ENCODE measurements at regions of chr2 and their contacts with region 1.

Region 1: GRCh38 chr2:55050133-55050994 is at the start of gene RTN4:
- DNase-seq: peak; percentile 99
- ATAC-seq: peak; percentile 92
- H3K4me3 Mint-ChIP-seq: peak within 1 kb of the TSS; percentile 99
- H3K27ac Mint-ChIP-seq: peak within 1 kb of the TSS; percentile 100
- H3K4me1 Mint-ChIP-seq: peaks cover 60% of the 10 kb centered on the region
- H3K27me3 Mint-ChIP-seq: no peaks in the 10 kb centered on the region
- total RNA-seq, gene RTN4: 70.3 to 84.8 TPM

Region 2: DNA sequence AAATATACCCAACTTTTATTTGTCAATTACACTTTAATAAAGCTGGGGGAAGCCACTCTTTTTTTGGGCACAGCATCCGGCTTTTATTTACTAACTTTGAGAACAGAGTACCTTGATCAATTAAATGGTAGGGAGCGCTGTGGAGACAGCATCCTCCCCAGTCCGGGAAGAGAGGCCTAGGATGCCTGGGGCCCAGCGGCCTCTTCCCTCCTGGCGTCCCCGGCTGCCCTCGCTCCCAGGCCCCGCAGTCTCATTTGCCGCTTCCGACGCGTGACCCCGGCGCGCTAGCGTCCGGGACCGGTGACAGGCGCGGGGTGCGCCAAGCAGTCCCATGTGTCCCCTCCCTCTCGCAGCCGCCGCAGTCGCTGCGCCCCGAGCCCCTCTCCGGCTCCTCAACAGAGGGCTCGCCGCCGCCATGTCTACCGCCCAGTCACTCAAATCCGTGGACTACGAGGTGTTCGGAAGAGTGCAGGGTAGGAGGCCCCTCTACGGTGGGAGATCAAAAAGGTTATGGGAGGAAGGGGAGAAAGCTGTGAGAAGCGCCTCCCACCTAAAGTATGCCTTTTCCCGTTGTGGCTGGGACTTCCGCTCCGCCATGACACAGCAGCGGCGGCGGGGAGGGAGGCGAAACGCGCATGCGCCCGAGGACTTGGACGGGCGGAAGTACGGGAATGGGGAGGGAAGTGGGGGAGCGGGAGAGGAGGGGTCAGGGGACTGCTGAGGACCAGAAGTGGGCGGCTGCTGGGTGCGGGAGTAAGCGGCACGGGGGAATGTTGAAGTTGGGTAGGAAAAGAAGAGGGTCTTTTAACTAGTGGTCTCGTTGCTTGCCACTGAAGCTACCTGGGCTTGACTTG is 934.9 kb before region 1 on chr2 and contains the start of gene ACYP2:
- CTCF ChIA-PET with region 1: no interaction called
- POLR2A ChIA-PET with region 1: no interaction called
- intact Hi-C with region 1: loop called in 1 of 2 experiments (anchors 1 kb)
- DNase-seq: peak; percentile 95
- ATAC-seq: peak; percentile 90
- H3K4me3 Mint-ChIP-seq: peak within 1 kb of the TSS; percentile 85
- H3K27ac Mint-ChIP-seq: peak within 1 kb of the TSS; percentile 96
- H3K4me1 Mint-ChIP-seq: peaks cover 12% of the 10 kb centered on the region
- H3K27me3 Mint-ChIP-seq: peaks cover 2% of the 10 kb centered on the region
- total RNA-seq, gene ACYP2: 6.0 to 6.9 TPM

Region 3: GRCh38 chr2:54899576-54900200 is 150.7 kb before region 1 on chr2:
- CTCF ChIA-PET with region 1: no interaction called
- POLR2A ChIA-PET with region 1: no interaction called
- intact Hi-C with region 1: loop called in 1 of 2 experiments (anchors 1 kb)
- DNase-seq: no peak
- ATAC-seq: no peak
- H3K4me3 Mint-ChIP-seq: no peak overlapping the region
- H3K27ac Mint-ChIP-seq: no peak overlapping the region
- H3K4me1 Mint-ChIP-seq: peaks cover 28% of the 10 kb centered on the region
- H3K27me3 Mint-ChIP-seq: no peaks in the 10 kb centered on the region

Region 4: DNA sequence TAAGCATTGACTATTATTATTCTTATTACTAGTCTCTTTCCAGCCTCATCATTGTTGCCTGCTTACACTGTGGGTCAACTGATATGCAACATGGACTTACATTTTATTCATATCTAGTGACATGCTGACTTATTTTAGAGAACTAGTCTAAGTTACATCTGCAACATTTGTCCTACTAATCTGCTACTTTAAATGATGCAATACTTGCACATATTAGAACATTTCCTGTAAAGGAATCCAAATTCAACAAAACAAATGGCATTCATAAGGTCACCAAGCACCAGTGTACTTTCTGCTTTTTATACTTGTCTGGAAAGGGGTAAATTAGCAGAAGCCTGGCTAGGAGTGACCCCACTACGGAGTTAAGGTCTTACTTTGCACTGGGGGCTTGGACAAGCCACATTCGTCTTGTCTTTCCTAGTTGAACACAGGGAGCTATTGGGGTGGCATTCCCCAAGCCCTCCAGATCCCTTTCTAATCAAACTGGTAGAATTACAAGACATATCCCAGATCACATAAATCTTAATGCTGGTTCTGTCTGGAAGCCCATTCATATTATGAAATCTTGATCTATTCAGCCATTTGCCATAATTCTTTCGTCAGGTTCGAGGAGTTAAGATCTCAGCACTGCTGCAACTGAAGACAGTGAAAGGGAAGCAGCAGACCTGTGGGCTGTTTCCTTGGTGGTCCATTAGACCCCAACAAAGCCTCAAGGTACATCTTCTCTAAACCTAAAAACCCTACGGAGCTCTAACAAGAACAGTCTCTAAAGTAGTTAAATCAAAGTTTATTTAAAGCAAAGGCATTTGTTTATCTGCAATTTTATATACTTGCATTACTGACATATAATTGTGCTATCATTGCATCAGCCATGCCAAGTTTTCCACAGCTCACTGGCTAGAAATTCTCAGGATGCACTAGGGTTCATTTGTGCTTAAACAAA is 49.8 kb after region 1 on chr2:
- CTCF ChIA-PET with region 1: no interaction called
- POLR2A ChIA-PET with region 1: no interaction called
- intact Hi-C with region 1: loop called in 1 of 2 experiments (anchors 5 kb)
- DNase-seq: no peak
- ATAC-seq: peak; percentile 60
- H3K4me3 Mint-ChIP-seq: no peak overlapping the region
- H3K27ac Mint-ChIP-seq: peak overlapping the region; percentile 81
- H3K4me1 Mint-ChIP-seq: peaks cover 13% of the 10 kb centered on the region
- H3K27me3 Mint-ChIP-seq: no peaks in the 10 kb centered on the region

Region 5: DNA sequence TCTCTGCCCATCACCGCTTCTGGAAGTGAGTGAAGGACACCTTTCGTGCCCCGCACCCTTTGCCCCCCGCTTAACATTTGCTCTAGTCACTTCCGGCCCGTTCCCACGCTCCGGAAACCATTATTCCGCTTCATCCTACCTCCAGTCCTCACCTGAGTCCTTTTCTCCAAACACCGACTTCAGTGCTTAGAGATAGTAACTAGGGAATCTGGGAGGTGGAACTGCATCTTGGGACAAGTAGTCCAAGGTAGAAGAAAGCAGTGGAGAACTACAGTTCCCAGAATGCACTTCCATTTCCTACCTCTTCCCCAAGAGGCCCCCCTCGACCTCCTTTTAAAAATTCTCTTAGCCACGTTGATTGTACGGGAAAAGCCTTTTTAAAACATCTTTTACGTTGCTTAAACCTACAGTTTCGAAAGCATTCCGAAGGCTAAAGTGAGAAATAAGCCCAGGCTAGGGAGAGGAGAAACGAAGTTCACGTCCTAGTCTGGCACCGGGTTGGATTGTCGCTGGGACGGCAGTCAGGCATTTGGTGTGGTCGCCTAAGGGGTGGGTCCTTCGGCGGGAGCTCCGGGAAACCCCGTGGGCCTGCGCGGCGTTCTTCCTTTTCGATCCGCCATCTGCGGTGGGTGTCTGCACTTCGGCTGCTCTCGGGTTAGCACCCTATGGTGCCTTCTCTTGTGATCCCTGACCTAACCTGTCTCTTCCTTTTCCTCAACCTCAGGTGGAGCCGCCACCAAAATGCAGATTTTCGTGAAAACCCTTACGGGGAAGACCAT is 181.9 kb after region 1 on chr2 and contains the starts of genes CLHC1 and RPS27A:
- CTCF ChIA-PET with region 1: no interaction called
- POLR2A ChIA-PET with region 1: interaction called, 3 read pairs
- intact Hi-C with region 1: loop called (anchors 1 kb)
- DNase-seq: peak; percentile 95
- ATAC-seq: peak; percentile 90
- H3K4me3 Mint-ChIP-seq: peak within 1 kb of the TSS; percentile 98
- H3K27ac Mint-ChIP-seq: peak within 1 kb of the TSS; percentile 98
- H3K4me1 Mint-ChIP-seq: peaks cover 60% of the 10 kb centered on the region
- H3K27me3 Mint-ChIP-seq: no peaks in the 10 kb centered on the region
- total RNA-seq, gene CLHC1: 4.0 to 6.1 TPM
- total RNA-seq, gene RPS27A: 674 to 1,461 TPM

Region 6: GRCh38 chr2:55311444-55311870 is 261.1 kb after region 1 on chr2:
- CTCF ChIA-PET with region 1: no interaction called
- POLR2A ChIA-PET with region 1: no interaction called
- intact Hi-C with region 1: loop called in 1 of 2 experiments (anchors 1 kb)
- DNase-seq: peak; percentile 61
- ATAC-seq: peak; percentile 97
- H3K4me3 Mint-ChIP-seq: no peak overlapping the region
- H3K27ac Mint-ChIP-seq: no peak overlapping the region
- H3K4me1 Mint-ChIP-seq: peaks cover 23% of the 10 kb centered on the region
- H3K27me3 Mint-ChIP-seq: no peaks in the 10 kb centered on the region

Region 7: GRCh38 chr2:55617175-55618024 is 567.0 kb after region 1 on chr2 and contains the start of gene PPP4R3B:
- CTCF ChIA-PET with region 1: no interaction called
- POLR2A ChIA-PET with region 1: no interaction called
- intact Hi-C with region 1: loop called (anchors 1 to 2 kb)
- DNase-seq: peak; percentile 99
- ATAC-seq: peak; percentile 87
- H3K4me3 Mint-ChIP-seq: no peak within 1 kb of the TSS
- H3K27ac Mint-ChIP-seq: no peak within 1 kb of the TSS
- H3K4me1 Mint-ChIP-seq: peaks cover 27% of the 10 kb centered on the region
- H3K27me3 Mint-ChIP-seq: no peaks in the 10 kb centered on the region
- total RNA-seq, gene PPP4R3B: 67.5 to 74.1 TPM